Posterior vena cava (tissue), 2 donors: ENCODE measurements at regions of chr3 and their contacts with region 1.

Region 1: DNA sequence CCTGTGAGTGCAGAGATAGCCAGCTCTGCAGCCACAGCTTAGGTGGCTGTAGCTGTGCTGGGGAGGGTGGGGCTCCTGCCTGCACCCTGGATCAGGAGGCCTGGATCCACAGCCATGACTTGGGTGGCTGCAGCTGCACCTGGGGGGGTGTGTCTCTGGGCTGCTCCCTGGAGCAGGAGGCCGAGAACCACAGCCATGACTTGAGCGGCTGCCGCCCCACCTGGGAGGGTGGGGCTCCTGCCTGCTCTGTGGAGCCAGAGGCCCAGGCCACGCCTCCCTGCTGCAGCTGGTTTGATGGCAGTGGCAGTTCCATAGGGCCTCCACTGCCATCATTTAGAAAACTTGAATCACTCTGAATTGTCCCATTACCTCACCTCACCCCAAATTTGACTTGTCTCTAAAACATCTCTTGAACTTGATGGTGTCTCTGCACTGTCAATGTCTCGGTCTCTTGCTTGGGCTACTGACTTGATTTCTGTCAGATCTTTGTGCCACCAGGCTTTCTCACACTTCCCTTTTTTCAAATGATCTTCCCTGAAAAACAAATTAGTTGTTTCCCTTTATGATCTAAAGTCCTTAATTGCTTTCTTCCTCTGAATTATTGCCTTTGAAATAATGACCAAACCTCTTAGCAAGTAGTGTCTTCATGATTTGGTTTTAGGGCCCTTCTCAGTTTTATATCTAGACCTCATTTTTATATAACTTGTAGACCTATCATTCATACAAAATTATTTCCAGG is 313.2 kb upstream of the MME start:
- DNase-seq: no peak

Region 2: GRCh38 chr3:155323063-155323666 is 556.2 kb after region 1 on chr3:
- intact Hi-C with region 1: loop called (anchors 10 kb)
- DNase-seq: no peak